Endothelial cell of umbilical vein (primary cell): ENCODE measurements at regions of chr14 and their contacts with region 1.

Region 1: GRCh38 chr14:29442696-29443095 is 485.0 kb downstream of the PRKD1 start:
- DNase-seq: peak; percentile 76
- H3K4me3 ChIP-seq: no peak overlapping the region
- H3K27ac ChIP-seq: peak overlapping the region; percentile 39
- H3K4me1 ChIP-seq: peaks cover 11% of the 10 kb centered on the region
- H3K27me3 ChIP-seq: no peaks in the 10 kb centered on the region
- CTCF ChIP-seq: no peak
- POLR2A ChIP-seq: no peak

Region 2: DNA sequence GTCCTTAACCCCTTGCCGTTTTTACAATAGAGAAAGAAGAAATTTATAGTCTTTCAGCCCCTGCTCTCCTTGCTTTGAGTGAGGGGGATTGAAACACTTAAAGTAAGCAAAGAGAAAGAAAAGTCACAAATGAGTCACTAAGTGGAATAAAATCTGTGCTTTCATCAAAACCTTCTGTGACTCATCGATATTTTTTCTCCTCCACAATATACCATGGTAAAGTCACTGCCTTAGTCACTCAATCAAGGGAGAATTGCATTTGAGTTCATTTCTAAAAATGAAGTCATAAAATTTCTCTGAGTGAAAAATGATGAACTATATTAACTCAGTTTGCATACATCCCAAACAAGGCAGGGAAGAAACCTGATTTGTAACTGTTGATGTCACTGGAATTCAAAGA is 205.8 kb before region 1 on chr14:
- CTCF ChIA-PET with region 1: no interaction called
- POLR2A ChIA-PET with region 1: no interaction called
- dilution Hi-C with region 1: no loop called
- intact Hi-C with region 1: loop called (anchors 2 kb)
- DNase-seq: peak; percentile 80
- H3K4me3 ChIP-seq: peak overlapping the region in 1 of 3 experiments; percentile 16
- H3K27ac ChIP-seq: peak overlapping the region; percentile 79
- H3K4me1 ChIP-seq: peaks cover 62% of the 10 kb centered on the region
- H3K27me3 ChIP-seq: no peaks in the 10 kb centered on the region
- CTCF ChIP-seq: no peak
- POLR2A ChIP-seq: no peak

Region 3: DNA sequence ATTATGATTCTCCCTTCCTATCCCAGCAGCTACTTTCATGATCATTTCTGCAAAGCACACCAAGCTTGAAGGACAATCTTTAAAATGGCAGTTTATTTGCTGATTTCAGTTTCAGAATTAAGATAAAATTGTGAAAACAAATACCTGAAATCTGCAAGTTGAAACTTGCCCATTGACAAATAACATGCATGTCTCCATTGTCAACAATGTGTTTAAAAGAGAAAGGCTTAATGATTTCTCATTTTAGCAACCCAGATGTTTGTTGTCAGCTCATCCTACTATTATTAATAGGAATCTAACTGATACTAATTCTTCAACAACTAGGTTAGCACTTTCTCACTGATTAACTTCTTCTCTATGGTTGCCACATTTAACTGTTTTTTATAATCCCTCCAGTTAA is 10.3 kb after region 1 on chr14:
- CTCF ChIA-PET with region 1: interaction called, 12 read pairs
- POLR2A ChIA-PET with region 1: no interaction called
- dilution Hi-C with region 1: no loop called
- intact Hi-C with region 1: no loop called
- DNase-seq: no peak
- H3K4me3 ChIP-seq: no peak overlapping the region
- H3K27ac ChIP-seq: no peak overlapping the region
- H3K4me1 ChIP-seq: no peaks in the 10 kb centered on the region
- H3K27me3 ChIP-seq: no peaks in the 10 kb centered on the region
- CTCF ChIP-seq: no peak
- POLR2A ChIP-seq: no peak

Region 4: DNA sequence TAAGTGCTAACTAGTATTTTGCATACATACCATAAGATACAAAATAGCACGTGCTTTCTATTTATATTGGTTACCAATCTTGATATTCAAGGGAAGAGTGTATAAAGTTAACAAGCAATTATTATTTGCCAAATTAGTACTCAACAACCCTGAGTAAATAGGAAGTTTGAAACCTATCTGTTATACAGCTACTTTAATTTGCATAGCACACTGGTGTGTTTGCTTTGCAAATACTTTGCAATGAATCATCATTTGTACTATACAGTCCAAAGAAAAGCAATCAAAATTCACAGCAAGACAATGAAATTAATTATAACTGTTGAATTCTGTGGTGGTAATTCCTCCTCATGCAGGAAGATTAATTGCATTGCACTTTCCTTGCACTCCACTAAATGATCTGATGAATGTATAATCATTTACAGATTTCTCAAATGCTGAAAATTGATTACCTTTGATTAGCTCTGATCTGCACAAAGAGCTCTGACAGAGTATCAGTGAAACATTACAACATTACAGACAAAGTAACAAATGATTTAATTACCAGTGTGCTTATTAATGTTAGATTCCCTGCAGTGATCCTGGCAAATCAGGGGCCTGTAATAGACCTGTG is 16.0 kb after region 1 on chr14:
- CTCF ChIA-PET with region 1: interaction called, 12 read pairs
- POLR2A ChIA-PET with region 1: no interaction called
- dilution Hi-C with region 1: no loop called
- intact Hi-C with region 1: no loop called
- DNase-seq: no peak
- H3K4me3 ChIP-seq: no peak overlapping the region
- H3K27ac ChIP-seq: no peak overlapping the region
- H3K4me1 ChIP-seq: peaks cover 3% of the 10 kb centered on the region
- H3K27me3 ChIP-seq: no peaks in the 10 kb centered on the region
- CTCF ChIP-seq: no peak
- POLR2A ChIP-seq: no peak

Region 5: DNA sequence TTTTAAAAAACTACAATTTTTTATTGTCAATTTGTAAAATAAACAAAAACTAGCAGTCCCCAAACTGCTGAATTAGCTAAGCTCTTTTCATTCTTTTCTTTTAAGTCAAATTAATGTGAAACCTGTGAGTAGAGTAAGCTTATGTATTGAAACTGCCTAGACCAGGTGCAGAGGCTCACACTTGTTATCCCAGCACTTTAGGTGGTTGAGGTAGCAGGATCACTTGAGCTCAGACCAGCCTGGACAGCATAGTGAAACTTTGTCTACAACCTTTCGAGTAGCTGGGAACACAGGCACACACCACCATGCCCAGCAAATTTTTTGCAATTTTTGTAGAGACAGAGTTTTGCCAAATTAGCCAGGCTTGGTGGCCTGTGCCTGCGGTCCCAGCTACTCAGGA is 1205.8 kb after region 1 on chr14:
- CTCF ChIA-PET with region 1: no interaction called
- POLR2A ChIA-PET with region 1: no interaction called
- dilution Hi-C with region 1: no loop called
- intact Hi-C with region 1: no loop called
- DNase-seq: no peak
- H3K4me3 ChIP-seq: no peak overlapping the region
- H3K27ac ChIP-seq: no peak overlapping the region
- H3K4me1 ChIP-seq: no peaks in the 10 kb centered on the region
- H3K27me3 ChIP-seq: no peaks in the 10 kb centered on the region
- CTCF ChIP-seq: no peak
- POLR2A ChIP-seq: no peak